ENCODE measurements at regions of chr9 and their contacts with region 1.

Region 1: DNA sequence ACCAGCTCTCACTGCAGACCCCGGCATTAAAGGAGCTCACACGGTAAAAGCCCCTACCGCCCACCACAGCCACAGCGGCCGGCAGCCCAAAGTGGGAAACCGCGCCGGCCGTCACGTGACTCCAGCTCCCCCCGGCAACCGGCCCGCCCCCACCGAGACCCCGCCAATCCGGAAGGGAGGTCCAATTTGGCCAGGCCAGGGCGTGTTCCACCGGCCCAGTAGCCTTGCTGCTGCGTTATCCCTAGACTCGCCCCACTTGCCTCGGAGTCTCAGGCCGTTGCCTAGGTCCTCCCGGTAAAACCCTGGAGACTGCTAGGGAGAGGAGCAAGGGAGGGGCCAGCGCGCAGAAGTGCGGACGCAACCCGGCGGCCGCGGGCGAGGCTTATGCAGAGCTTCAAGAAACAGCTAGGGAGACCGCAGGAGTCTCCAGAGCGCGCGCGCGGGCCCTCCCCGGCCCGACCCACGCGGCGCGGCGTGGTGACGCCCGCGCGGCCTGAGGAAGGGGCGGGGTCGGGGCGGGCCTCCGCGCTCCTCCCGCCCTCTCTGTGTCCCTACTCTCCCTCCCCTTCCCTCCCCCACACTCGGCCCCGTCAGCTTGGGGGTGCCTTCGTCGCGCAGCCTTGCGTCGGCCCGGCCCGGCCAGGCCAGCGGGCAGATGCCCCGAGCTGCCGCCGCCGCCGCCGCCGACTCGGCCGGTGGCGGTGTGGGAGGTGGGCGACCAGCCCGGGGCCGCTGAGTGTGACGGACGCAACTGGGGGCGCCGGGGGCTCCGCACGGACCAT is at the start of gene RIC1:
- DNase-seq: peak; percentile 96
- ATAC-seq: peak; percentile 79
- H3K4me3 ChIP-seq: peak within 1 kb of the TSS; percentile 82 to 99 (median 92)
- H3K4me3 Mint-ChIP-seq: peak within 1 kb of the TSS; percentile 98
- H3K27ac ChIP-seq: peak within 1 kb of the TSS; percentile 85 to 93
- H3K27ac Mint-ChIP-seq: peak within 1 kb of the TSS; percentile 99
- H3K4me1 ChIP-seq: peaks cover 52 to 55% of the 10 kb centered on the region in 2 donors
- H3K4me1 Mint-ChIP-seq: peaks cover 59% of the 10 kb centered on the region
- H3K27me3 ChIP-seq: no peaks in the 10 kb centered on the region
- H3K27me3 Mint-ChIP-seq: no peaks in the 10 kb centered on the region
- CTCF ChIP-seq: no peak
- total RNA-seq, gene RIC1: 58.8 and 58.9 TPM in 2 replicates

Region 2: DNA sequence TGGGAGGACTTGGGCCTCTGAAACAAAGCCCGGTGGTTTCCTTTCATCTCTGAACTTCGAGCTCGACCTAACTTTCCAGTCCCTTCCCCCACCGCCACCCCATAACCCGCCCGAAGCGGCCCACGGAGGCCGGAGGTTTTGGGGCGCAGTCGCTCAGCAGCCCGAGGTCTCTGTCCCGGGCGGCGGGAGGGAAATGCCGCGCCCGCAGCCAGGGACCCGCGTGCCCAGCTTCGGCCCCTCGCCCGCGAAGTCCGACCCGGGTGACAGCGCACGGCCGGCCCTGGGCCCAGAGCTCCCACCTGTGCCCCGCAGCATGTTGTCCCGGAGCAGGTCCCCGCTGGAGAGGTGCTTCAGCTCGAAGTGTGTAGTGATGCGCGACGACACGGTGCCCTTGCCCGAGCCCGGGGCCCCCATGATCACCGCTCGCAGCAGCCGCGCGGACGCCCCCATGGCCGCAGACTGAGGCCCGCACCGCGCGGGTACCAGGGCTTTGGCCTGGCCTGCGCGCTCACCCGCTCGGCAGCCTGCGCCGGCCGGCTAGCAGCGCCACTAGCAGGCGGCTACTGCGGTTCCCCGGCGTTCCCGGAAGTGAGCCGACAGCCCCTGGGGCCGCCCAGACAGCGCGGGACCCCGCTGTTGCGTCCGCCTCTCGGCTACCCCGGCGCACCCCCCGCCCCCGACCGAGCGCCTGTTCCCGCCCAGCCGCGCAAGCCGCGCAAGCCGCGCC is 887.9 kb before region 1 on chr9 and contains the start of gene AK3:
- CTCF ChIA-PET with region 1: no interaction called
- POLR2A ChIA-PET with region 1: interaction called, 3 read pairs
- intact Hi-C with region 1: loop called (anchors 1 kb)
- DNase-seq: peak; percentile 92
- ATAC-seq: peak; percentile 92
- H3K4me3 ChIP-seq: peak within 1 kb of the TSS; percentile 73 to 90 (median 85)
- H3K4me3 Mint-ChIP-seq: peak within 1 kb of the TSS; percentile 89
- H3K27ac ChIP-seq: peak within 1 kb of the TSS; percentile 51 to 83
- H3K27ac Mint-ChIP-seq: peak within 1 kb of the TSS; percentile 90
- H3K4me1 ChIP-seq: peaks cover 19 to 23% of the 10 kb centered on the region in 2 donors
- H3K4me1 Mint-ChIP-seq: peaks cover 27% of the 10 kb centered on the region
- H3K27me3 ChIP-seq: no peaks in the 10 kb centered on the region
- H3K27me3 Mint-ChIP-seq: no peaks in the 10 kb centered on the region
- CTCF ChIP-seq: no peak
- total RNA-seq, gene AK3: 20.4 and 22.9 TPM in 2 replicates

Region 3: GRCh38 chr9:5450359-5451091 is 178.2 kb before region 1 on chr9 and contains the start of gene CD274:
- CTCF ChIA-PET with region 1: interaction called, 9 read pairs
- POLR2A ChIA-PET with region 1: interaction called, 12 read pairs
- intact Hi-C with region 1: no loop called
- DNase-seq: peak; percentile 85
- ATAC-seq: peak; percentile 91
- H3K4me3 ChIP-seq: peak within 1 kb of the TSS; percentile 75 to 93 (median 81)
- H3K4me3 Mint-ChIP-seq: peak within 1 kb of the TSS; percentile 83
- H3K27ac ChIP-seq: peak within 1 kb of the TSS; percentile 72 to 83
- H3K27ac Mint-ChIP-seq: peak within 1 kb of the TSS; percentile 94
- H3K4me1 ChIP-seq: peaks cover 21 to 30% of the 10 kb centered on the region in 2 donors
- H3K4me1 Mint-ChIP-seq: peaks cover 49% of the 10 kb centered on the region
- H3K27me3 ChIP-seq: no peaks in the 10 kb centered on the region
- H3K27me3 Mint-ChIP-seq: no peaks in the 10 kb centered on the region
- CTCF ChIP-seq: peak; percentile 57
- total RNA-seq, gene CD274: 5.2 and 7.0 TPM in 2 replicates

Region 4: DNA sequence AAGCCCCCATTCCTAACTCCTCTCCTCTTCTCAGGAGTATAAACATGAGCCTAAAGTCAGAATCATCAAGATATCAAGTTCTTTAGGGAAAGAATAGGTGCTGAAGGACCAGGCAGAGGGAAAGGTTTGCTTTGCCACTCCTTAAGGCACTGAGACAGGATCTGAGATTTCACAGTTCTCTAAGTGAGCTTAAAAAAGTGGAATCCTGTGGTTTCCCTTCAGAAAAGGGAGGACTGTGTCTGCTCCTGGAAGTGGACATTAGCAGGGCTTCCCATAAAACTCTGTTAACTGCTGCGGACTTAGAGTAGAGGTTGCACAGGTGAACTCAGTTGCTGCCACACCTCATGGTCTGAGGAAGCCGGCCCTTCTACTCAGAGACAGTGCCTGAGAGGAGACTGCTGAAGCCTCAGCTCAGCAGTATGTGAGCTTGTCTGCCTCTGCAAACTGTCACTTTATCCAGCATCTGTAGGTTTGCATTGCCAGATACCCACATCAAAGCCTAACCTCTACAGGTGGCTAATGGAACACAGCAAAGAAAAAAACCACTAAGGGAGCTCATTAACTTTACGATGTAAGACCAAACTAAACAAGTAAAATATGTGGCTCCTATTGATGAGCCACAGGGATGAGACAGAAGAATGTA is 43.1 kb after region 1 on chr9:
- CTCF ChIA-PET with region 1: no interaction called
- POLR2A ChIA-PET with region 1: no interaction called
- intact Hi-C with region 1: loop called (anchors 10 kb)
- DNase-seq: no peak
- ATAC-seq: no peak
- H3K4me3 ChIP-seq: no peak overlapping the region
- H3K4me3 Mint-ChIP-seq: no peak overlapping the region
- H3K27ac ChIP-seq: no peak overlapping the region
- H3K27ac Mint-ChIP-seq: peak overlapping the region; percentile 34
- H3K4me1 ChIP-seq: no peaks in the 10 kb centered on the region
- H3K4me1 Mint-ChIP-seq: peaks cover 30% of the 10 kb centered on the region
- H3K27me3 ChIP-seq: no peaks in the 10 kb centered on the region
- H3K27me3 Mint-ChIP-seq: no peaks in the 10 kb centered on the region
- CTCF ChIP-seq: no peak

Region 5: GRCh38 chr9:5832543-5833529 is 204.1 kb after region 1 on chr9 and contains the start of gene ERMP1:
- CTCF ChIA-PET with region 1: interaction called, 3 read pairs
- POLR2A ChIA-PET with region 1: no interaction called
- intact Hi-C with region 1: loop called (anchors 2 kb)
- DNase-seq: peak; percentile 93
- ATAC-seq: peak; percentile 89
- H3K4me3 ChIP-seq: peak within 1 kb of the TSS; percentile 63 to 83 (median 75)
- H3K4me3 Mint-ChIP-seq: peak within 1 kb of the TSS; percentile 95
- H3K27ac ChIP-seq: peak within 1 kb of the TSS in 1 of 2 donors; percentile 50
- H3K27ac Mint-ChIP-seq: peak within 1 kb of the TSS; percentile 93
- H3K4me1 ChIP-seq: peaks cover 19 to 25% of the 10 kb centered on the region in 2 donors
- H3K4me1 Mint-ChIP-seq: peaks cover 37% of the 10 kb centered on the region
- H3K27me3 ChIP-seq: no peaks in the 10 kb centered on the region
- H3K27me3 Mint-ChIP-seq: no peaks in the 10 kb centered on the region
- CTCF ChIP-seq: peak; percentile 96
- total RNA-seq, gene ERMP1: 10.6 and 12.8 TPM in 2 replicates

Region 6: DNA sequence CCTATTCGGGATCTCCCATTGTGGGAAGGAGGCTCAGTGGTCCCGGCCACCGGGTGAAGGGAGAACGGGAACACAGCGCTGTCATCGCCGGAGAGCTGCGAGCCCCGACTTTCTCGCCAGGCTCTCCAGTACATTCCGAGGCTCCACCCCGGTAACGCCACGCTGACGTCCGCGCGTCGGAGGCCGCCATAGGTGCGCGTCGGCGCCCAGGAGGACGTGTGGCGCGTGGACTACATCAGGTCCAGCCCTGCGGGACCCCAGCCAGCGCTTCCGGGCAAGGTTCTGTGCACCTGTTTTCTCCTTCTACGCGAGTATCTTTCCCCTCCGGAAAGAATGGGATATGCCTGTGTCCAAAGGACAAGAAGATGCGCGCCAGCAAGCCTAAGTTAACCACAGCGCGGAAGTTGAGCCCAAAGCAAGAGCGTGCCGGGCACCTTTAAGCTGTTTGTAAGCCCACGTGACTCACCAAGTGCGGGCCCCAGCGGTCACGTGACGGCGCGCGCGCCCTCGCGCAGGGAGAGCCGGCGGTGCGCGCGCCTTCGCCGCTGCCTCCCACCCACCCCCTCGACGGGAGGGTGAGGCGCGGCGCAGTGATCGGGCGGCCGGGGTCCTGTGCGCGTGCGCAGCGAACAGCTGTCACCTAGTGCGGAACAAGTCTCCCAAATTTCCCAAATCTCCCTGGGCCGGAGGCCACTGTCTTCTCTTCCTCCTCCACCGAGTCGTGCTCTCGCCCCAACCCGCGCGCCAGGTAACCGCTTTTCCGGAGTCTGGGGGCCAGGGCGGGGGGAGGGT is 1128.9 kb after region 1 on chr9 and contains the start of gene KDM4C:
- CTCF ChIA-PET with region 1: no interaction called
- POLR2A ChIA-PET with region 1: interaction called, 4 read pairs
- intact Hi-C with region 1: loop called (anchors 2 kb)
- DNase-seq: peak; percentile 99
- ATAC-seq: peak; percentile 78
- H3K4me3 ChIP-seq: peak within 1 kb of the TSS; percentile 74 to 98 (median 96)
- H3K4me3 Mint-ChIP-seq: peak within 1 kb of the TSS; percentile 100
- H3K27ac ChIP-seq: peak within 1 kb of the TSS; percentile 94 to 100
- H3K27ac Mint-ChIP-seq: peak within 1 kb of the TSS; percentile 100
- H3K4me1 ChIP-seq: peaks cover 29 to 35% of the 10 kb centered on the region in 2 donors
- H3K4me1 Mint-ChIP-seq: peaks cover 32% of the 10 kb centered on the region
- H3K27me3 ChIP-seq: no peaks in the 10 kb centered on the region
- H3K27me3 Mint-ChIP-seq: no peaks in the 10 kb centered on the region
- CTCF ChIP-seq: no peak
- total RNA-seq, gene KDM4C: 141 and 155 TPM in 2 replicates

Measured in B cell (primary cell).